PC-9 (cell line): ENCODE measurements at regions of chr3 and their contacts with region 1.

Region 1: GRCh38 chr3:196537319-196537984 is 22.3 kb upstream of the SMCO1 start:
- DNase-seq: peak; percentile 46 to 70
- H3K4me3 ChIP-seq: no peak overlapping the region; the same call in 1 of the 2 replicates
- H3K27ac ChIP-seq: no peak overlapping the region; the same call in 1 of the 2 replicates
- H3K4me1 ChIP-seq: 0 out of 2 replicates have a peak, but pooled peaks cover 8% of the 10 kb centered on the region
- H3K27me3 ChIP-seq: no peaks in the 10 kb centered on the region
- CTCF ChIP-seq: peak; percentile 96

Region 2: DNA sequence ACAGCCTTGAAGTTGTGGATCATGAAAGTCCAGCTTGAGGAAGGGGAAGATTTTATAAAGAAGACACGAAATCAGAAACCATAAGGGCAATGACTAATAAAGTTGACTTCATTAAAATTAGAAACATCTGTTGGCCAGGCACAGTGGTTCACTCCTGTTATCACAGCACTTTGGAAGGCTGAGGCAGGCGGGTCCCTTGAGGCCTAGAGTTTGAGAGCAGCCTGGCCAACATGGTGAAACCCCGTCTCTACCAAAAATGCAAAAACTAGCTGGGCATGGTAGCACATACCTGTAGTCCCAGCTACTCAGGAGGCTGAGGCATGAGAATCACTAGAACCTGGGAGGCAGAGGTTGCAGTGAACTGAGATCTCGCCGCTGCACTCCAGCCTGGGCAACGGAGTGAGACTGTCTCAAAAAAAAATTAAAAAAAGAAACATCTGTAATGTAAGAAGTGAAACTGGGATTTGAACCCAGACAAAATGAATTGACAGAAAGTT is 97.4 kb before region 1 on chr3:
- CTCF ChIA-PET with region 1: interaction called, 13 read pairs
- POLR2A ChIA-PET with region 1: no interaction called
- intact Hi-C with region 1: no loop called
- DNase-seq: no peak
- H3K4me3 ChIP-seq: no peak overlapping the region
- H3K27ac ChIP-seq: no peak overlapping the region
- H3K4me1 ChIP-seq: no peaks in the 10 kb centered on the region
- H3K27me3 ChIP-seq: no peaks in the 10 kb centered on the region
- CTCF ChIP-seq: no peak

Region 3: GRCh38 chr3:196568246-196569002 is 31.0 kb after region 1 on chr3 and contains the starts of genes FBXO45 and WDR53:
- CTCF ChIA-PET with region 1: no interaction called
- POLR2A ChIA-PET with region 1: interaction called, 5 read pairs
- intact Hi-C with region 1: loop called (anchors 2 kb)
- DNase-seq: peak; percentile 90 to 98
- H3K4me3 ChIP-seq: peak within 1 kb of the TSS; percentile 75
- H3K27ac ChIP-seq: peak within 1 kb of the TSS; percentile 30
- H3K4me1 ChIP-seq: peaks cover 34% of the 10 kb centered on the region
- H3K27me3 ChIP-seq: no peaks in the 10 kb centered on the region
- CTCF ChIP-seq: no peak
- total RNA-seq, gene FBXO45: 16.5 and 21.3 TPM in 2 replicates
- total RNA-seq, gene WDR53: 33.5 and 34.8 TPM in 2 replicates

Region 4: GRCh38 chr3:196596355-196596754 is 58.9 kb after region 1 on chr3:
- CTCF ChIA-PET with region 1: interaction called, 19 read pairs
- POLR2A ChIA-PET with region 1: no interaction called
- intact Hi-C with region 1: no loop called
- DNase-seq: no peak
- H3K4me3 ChIP-seq: no peak overlapping the region
- H3K27ac ChIP-seq: no peak overlapping the region
- H3K4me1 ChIP-seq: no peaks in the 10 kb centered on the region
- H3K27me3 ChIP-seq: no peaks in the 10 kb centered on the region
- CTCF ChIP-seq: no peak

Region 5: DNA sequence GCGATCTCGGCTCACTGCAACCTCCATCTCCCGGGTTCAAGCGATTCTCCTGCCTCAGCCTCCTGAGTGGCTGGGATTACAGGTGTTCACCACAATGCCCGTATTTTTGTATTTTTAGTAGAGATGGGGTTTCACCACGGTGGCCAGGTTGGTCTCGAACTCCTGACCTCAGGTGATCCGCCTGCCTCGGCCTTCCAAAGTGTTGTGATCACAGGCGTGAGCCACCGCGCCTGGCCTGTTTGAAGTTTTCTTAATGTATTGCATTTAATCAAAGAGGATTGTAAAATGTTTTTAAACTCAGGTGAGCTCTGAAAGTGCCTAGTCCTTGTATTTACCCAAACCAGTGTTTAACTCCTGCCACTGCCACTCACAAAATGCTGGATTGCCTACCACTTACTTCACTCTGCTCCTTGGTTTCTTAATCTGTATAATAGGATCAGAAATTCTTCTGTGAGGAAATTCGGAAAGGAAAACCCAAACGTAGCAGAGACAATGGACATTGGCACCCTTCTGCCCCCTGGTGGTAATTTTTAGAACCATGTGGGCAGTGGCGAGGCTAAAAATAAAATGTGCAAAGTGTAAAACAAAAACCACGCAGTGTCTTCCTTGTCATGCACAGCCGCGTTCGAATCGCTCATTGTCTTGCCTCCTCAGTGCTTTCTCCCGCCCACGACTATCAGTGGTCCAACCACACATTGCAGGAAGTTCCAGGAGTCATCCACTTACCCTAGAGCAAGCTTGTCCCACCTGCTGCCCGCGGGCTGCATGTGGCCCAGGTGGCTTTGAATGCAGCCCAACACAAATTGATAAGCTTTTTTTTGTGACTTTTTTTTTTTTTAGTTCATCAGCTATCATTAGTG is 147.3 kb after region 1 on chr3:
- CTCF ChIA-PET with region 1: no interaction called
- POLR2A ChIA-PET with region 1: no interaction called
- intact Hi-C with region 1: loop called (anchors 2 kb)
- DNase-seq: peak; percentile 45 to 69
- H3K4me3 ChIP-seq: no peak overlapping the region
- H3K27ac ChIP-seq: no peak overlapping the region
- H3K4me1 ChIP-seq: 0 out of 2 replicates have a peak, but pooled peaks cover 9% of the 10 kb centered on the region
- H3K27me3 ChIP-seq: no peaks in the 10 kb centered on the region
- CTCF ChIP-seq: peak; percentile 97

Region 6: GRCh38 chr3:196793235-196793641 is 255.8 kb after region 1 on chr3:
- CTCF ChIA-PET with region 1: no interaction called
- POLR2A ChIA-PET with region 1: no interaction called
- intact Hi-C with region 1: loop called (anchors 10 kb)
- DNase-seq: peak; percentile 80 to 100
- H3K4me3 ChIP-seq: peak overlapping the region; percentile 37; the same call in 1 of the 2 replicates
- H3K27ac ChIP-seq: peak overlapping the region; percentile 92
- H3K4me1 ChIP-seq: peaks cover 81% of the 10 kb centered on the region
- H3K27me3 ChIP-seq: no peaks in the 10 kb centered on the region
- CTCF ChIP-seq: no peak

Region 7: GRCh38 chr3:196969660-196970546 is 432.5 kb after region 1 on chr3:
- CTCF ChIA-PET with region 1: no interaction called
- POLR2A ChIA-PET with region 1: no interaction called
- intact Hi-C with region 1: loop called (anchors 1 kb)
- DNase-seq: peak in 1 of 2 experiments; percentile 80
- H3K4me3 ChIP-seq: peak overlapping the region; percentile 73; the same call in 1 of the 2 replicates
- H3K27ac ChIP-seq: no peak overlapping the region
- H3K4me1 ChIP-seq: no peaks in the 10 kb centered on the region
- H3K27me3 ChIP-seq: peaks cover 22% of the 10 kb centered on the region
- CTCF ChIP-seq: peak; percentile 72

Region 8: GRCh38 chr3:198043119-198043518 is 1505.7 kb after region 1 on chr3:
- CTCF ChIA-PET with region 1: no interaction called
- POLR2A ChIA-PET with region 1: no interaction called
- intact Hi-C with region 1: no loop called
- DNase-seq: no peak
- H3K4me3 ChIP-seq: no peak overlapping the region
- H3K27ac ChIP-seq: no peak overlapping the region
- H3K4me1 ChIP-seq: no peaks in the 10 kb centered on the region
- H3K27me3 ChIP-seq: no peaks in the 10 kb centered on the region
- CTCF ChIP-seq: no peak